SK-N-SH (cell line): ENCODE measurements at regions of chr17 and their contacts with region 1.

Region 1: GRCh38 chr17:49180303-49180702 is 30.1 kb downstream of the GNGT2 start:
- DNase-seq: peak; percentile 78
- H3K4me3 ChIP-seq: peak overlapping the region in 1 of 2 experiments; percentile 9; a peak in 1 of 4 replicates
- H3K27ac ChIP-seq: no peak overlapping the region
- H3K4me1 ChIP-seq: no peaks in the 10 kb centered on the region
- H3K27me3 ChIP-seq: peaks cover 55% of the 10 kb centered on the region; the same call in 1 of the 2 replicates
- CTCF ChIP-seq: peak; percentile 97
- EP300 ChIP-seq: no peak
- RAD21 ChIP-seq: peak; percentile 82

Region 2: DNA sequence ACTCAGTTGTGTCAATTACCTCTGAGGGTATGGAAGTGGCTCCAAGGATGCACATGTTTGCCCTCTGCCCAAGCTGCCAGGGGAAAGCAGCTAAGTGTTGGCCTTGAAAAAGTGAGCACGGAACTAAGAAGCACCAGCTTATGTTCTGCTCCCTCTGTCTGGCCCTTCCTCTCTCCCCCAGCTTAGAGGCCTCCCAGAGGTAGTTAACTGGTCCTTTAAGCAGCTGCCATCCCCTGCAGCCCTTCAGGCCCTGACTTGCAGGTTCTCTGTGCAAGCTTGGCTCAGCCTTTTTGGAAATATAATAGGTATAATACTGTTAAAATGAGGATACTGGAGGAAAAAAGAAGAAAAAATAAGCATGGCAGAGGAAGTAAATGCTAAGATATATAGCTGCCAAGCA is 279.1 kb before region 1 on chr17:
- CTCF ChIA-PET with region 1: no interaction called
- POLR2A ChIA-PET with region 1: no interaction called
- DNase-seq: no peak
- H3K4me3 ChIP-seq: no peak overlapping the region
- H3K27ac ChIP-seq: no peak overlapping the region
- H3K4me1 ChIP-seq: no peaks in the 10 kb centered on the region
- H3K27me3 ChIP-seq: no peaks in the 10 kb centered on the region
- CTCF ChIP-seq: no peak
- EP300 ChIP-seq: no peak
- RAD21 ChIP-seq: no peak

Region 3: DNA sequence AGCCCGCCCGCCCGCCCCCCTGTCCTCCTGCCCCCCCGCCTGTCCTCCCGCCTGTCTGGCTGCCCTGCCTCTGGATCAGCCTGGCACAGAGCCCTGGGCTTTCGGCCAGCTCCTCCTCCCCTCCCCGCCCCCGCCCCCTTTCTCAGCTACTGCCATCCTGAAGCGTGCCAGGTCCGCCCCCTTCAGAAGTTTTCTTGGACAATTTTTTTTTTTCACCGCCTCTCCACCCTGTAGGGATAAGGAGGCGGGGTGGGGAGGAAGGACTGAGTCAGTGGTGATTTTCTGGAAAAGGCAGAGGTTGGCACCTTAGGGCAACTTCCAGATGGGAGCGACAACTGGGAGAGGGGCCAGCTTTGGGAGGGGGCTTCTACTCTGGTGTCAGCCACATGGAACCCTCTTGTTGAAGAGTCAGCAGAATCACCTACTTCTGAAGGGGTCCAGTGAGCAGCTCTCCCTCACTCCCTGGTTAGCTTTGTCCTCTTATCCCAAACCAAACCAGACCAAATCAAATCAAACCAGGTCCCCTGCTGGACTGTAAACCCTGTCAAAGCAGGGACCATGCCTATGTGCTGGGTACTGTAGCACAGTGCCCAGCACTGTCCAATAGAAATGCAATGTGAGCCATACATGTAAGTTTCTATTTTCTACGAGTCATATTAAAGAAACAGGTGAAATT is 163.4 kb before region 1 on chr17:
- CTCF ChIA-PET with region 1: no interaction called
- POLR2A ChIA-PET with region 1: no interaction called
- DNase-seq: peak; percentile 73
- H3K4me3 ChIP-seq: no peak overlapping the region
- H3K27ac ChIP-seq: no peak overlapping the region
- H3K4me1 ChIP-seq: peaks cover 0 to 10% of the 10 kb centered on the region in 2 experiments; a peak in 2 of 4 replicates
- H3K27me3 ChIP-seq: peaks cover 89% of the 10 kb centered on the region
- CTCF ChIP-seq: no peak
- EP300 ChIP-seq: no peak
- RAD21 ChIP-seq: no peak

Region 4: GRCh38 chr17:49170216-49170615 is 10.1 kb before region 1 on chr17:
- CTCF ChIA-PET with region 1: interaction called, 14 read pairs
- POLR2A ChIA-PET with region 1: no interaction called
- DNase-seq: no peak
- H3K4me3 ChIP-seq: no peak overlapping the region
- H3K27ac ChIP-seq: no peak overlapping the region
- H3K4me1 ChIP-seq: no peaks in the 10 kb centered on the region
- H3K27me3 ChIP-seq: peaks cover 88% of the 10 kb centered on the region
- CTCF ChIP-seq: no peak
- EP300 ChIP-seq: no peak
- RAD21 ChIP-seq: no peak

Region 5: DNA sequence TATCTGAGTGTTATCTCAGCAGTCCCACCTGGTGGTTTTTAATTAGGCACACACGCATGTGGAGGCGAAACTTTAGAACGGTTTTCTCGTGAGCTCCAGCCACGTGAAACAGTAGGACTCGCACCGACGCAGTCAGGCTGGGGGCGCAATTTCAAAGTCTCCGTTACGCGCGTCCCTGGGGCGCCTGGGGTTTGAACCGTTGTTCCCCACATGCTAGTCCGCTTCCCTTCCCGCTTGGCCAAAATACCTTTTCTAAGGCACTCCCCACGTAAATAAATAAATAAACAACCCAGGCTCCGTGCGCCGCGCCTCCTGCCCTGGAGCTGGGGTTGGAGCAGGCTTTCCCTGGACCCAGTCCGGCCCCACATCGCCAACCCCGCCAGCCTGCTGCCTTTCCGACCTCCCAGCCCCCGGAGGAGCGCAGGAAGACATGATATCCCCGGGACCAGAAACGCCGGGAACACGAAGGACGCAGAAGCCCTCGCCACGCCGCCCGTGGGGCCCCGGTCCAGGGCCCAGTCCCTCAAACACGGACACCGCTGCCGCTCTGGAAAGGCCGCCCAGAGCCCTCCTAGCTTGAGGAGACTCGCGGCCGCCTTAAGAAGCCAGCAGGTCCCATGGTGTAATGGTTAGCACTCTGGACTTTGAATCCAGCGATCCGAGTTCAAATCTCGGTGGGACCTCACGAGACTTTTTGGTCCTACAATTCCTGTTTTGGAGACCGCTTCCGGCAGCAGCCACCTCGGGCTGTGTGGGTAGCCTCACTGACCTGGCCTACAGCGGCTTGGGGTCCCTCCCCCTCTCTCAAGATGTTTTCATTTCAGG is 11.8 kb after region 1 on chr17:
- CTCF ChIA-PET with region 1: interaction called, 40 read pairs
- POLR2A ChIA-PET with region 1: no interaction called
- DNase-seq: peak; percentile 88
- H3K4me3 ChIP-seq: peak overlapping the region; percentile 64 to 77
- H3K27ac ChIP-seq: peak overlapping the region; percentile 90 to 94
- H3K4me1 ChIP-seq: peaks cover 0 to 3% of the 10 kb centered on the region in 2 experiments; a peak in 2 of 4 replicates
- H3K27me3 ChIP-seq: no peaks in the 10 kb centered on the region; the same call in 1 of the 2 replicates
- CTCF ChIP-seq: peak; percentile 55
- EP300 ChIP-seq: peak in 1 of 2 experiments; percentile 40; a peak in 3 of 4 replicates
- RAD21 ChIP-seq: no peak

Region 6: GRCh38 chr17:49223168-49223516 is 42.8 kb after region 1 on chr17:
- CTCF ChIA-PET with region 1: interaction called, 100 read pairs
- POLR2A ChIA-PET with region 1: no interaction called
- DNase-seq: no peak
- H3K4me3 ChIP-seq: peak overlapping the region in 1 of 2 experiments; percentile 44; a peak in 2 of 4 replicates
- H3K27ac ChIP-seq: no peak overlapping the region
- H3K4me1 ChIP-seq: no peaks in the 10 kb centered on the region
- H3K27me3 ChIP-seq: peaks cover 43% of the 10 kb centered on the region
- CTCF ChIP-seq: no peak
- EP300 ChIP-seq: no peak
- RAD21 ChIP-seq: no peak

Region 7: DNA sequence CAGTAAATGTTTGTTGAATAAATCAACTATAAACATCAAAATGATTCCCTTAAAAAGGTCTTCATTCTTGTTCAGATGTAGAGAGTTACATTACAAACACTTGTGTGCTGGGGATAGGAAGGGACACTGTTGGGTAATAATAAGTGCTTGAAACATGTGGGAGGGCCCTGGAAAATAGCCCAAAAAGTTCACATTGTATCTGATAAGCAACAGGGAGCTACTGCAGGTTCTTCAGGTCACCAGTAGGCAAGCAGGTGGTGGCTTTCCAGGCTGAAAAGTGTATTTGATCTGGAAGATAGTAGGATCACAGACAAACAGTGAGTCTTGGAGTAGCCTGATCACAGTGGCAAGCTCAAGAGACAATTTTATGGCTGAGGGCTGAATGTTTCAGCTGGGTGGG is 200.8 kb after region 1 on chr17:
- CTCF ChIA-PET with region 1: no interaction called
- POLR2A ChIA-PET with region 1: no interaction called
- DNase-seq: no peak
- H3K4me3 ChIP-seq: no peak overlapping the region
- H3K27ac ChIP-seq: no peak overlapping the region
- H3K4me1 ChIP-seq: peaks cover 0 to 10% of the 10 kb centered on the region in 2 experiments; a peak in 1 of 4 replicates
- H3K27me3 ChIP-seq: no peaks in the 10 kb centered on the region
- CTCF ChIP-seq: no peak
- EP300 ChIP-seq: no peak
- RAD21 ChIP-seq: no peak